Left ventricle myocardium superior (tissue), 1 donor: ENCODE measurements at regions of chr16 and their contacts with region 1.

Region 1: DNA sequence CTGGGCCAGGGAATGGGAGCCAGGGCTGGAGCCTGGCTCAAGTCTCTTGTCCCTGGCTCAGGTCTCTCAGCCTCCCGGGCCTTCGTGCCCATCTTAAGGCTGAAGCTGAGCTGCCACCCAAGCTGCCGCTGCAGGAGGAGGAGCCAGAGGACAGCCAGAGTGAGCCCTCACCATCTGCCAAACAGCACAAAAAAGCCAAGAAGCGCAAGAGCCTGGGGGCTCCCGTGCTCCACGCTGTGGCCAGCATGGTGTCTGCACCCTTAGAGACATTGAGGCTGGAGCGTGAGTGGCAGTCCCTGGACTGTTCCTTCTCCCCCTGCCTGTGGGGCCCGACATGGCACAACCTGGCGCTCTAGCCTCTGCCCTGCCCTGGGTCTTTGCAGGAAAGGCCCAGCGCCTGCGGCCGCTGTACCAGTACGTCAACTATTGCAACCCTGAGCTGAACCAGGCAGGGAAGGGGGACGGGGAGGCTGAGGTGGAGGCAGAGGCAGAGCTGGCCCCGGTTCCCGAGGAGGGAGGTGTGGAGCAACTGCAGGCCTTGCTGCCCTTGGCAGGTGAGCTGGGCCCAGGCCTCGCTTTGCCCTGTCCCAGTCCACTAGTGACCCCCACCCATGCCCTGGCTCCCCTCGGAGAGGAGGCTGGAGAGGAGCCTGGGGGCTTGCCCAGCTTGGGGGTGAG is 1.3 kb downstream of the C16orf86 start:
- DNase-seq: peak; percentile 90
- ATAC-seq: peak; percentile 87

Region 2: GRCh38 chr16:67561824-67562525 is 106.0 kb before region 1 on chr16:
- intact Hi-C with region 1: loop called (anchors 5 kb)
- DNase-seq: peak; percentile 98
- ATAC-seq: peak; percentile 89